ENCODE measurements at regions of chr14 and their contacts with region 1.

Region 1: GRCh38 chr14:22570132-22570949 is 18.7 kb downstream of the DAD1 start:
- DNase-seq: peak; percentile 91
- H3K4me3 Mint-ChIP-seq: peak overlapping the region; percentile 80
- H3K27ac Mint-ChIP-seq: peak overlapping the region; percentile 99
- H3K4me1 Mint-ChIP-seq: peaks cover 74% of the 10 kb centered on the region
- H3K27me3 Mint-ChIP-seq: no peaks in the 10 kb centered on the region

Region 2: GRCh38 chr14:21987937-21988336 is 582.4 kb before region 1 on chr14:
- CTCF ChIA-PET with region 1: interaction called, 11 read pairs
- POLR2A ChIA-PET with region 1: no interaction called
- intact Hi-C with region 1: no loop called
- DNase-seq: peak; percentile 25
- H3K4me3 Mint-ChIP-seq: no peak overlapping the region
- H3K27ac Mint-ChIP-seq: peak overlapping the region; percentile 92
- H3K4me1 Mint-ChIP-seq: peaks cover 11% of the 10 kb centered on the region
- H3K27me3 Mint-ChIP-seq: no peaks in the 10 kb centered on the region

Region 3: DNA sequence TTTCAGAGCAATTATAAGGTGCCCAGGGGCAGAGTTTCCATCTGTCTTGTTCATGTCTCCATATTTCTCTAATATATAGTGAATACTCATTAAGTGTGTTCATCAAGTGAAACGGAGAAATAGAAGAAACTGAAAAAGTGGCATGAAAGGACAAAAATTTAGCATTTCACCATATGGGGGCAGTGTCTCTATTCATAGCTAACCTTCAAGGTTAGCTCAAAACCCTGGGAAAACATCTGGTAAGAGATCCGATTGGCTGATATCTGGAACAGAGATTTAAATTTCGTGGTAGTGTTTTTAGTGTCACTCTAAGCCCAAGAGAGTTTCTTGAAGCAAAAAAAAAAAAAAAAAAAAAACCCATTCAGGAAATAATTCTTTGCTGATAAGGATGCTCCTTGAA is 348.8 kb before region 1 on chr14:
- CTCF ChIA-PET with region 1: interaction called, 5 read pairs
- POLR2A ChIA-PET with region 1: no interaction called
- intact Hi-C with region 1: loop called (anchors 5 kb)
- DNase-seq: no peak
- H3K4me3 Mint-ChIP-seq: peak overlapping the region; percentile 59
- H3K27ac Mint-ChIP-seq: peak overlapping the region; percentile 56
- H3K4me1 Mint-ChIP-seq: peaks cover 10% of the 10 kb centered on the region
- H3K27me3 Mint-ChIP-seq: no peaks in the 10 kb centered on the region

Region 4: GRCh38 chr14:22542360-22542759 is 28.0 kb before region 1 on chr14:
- CTCF ChIA-PET with region 1: interaction called, 15 read pairs
- POLR2A ChIA-PET with region 1: interaction called, 24 read pairs
- intact Hi-C with region 1: no loop called
- DNase-seq: no peak
- H3K4me3 Mint-ChIP-seq: peak overlapping the region; percentile 81
- H3K27ac Mint-ChIP-seq: peak overlapping the region; percentile 99
- H3K4me1 Mint-ChIP-seq: peaks cover 98% of the 10 kb centered on the region
- H3K27me3 Mint-ChIP-seq: no peaks in the 10 kb centered on the region

Region 5: GRCh38 chr14:22653012-22653621 is 82.8 kb after region 1 on chr14:
- CTCF ChIA-PET with region 1: interaction called, 72 read pairs
- POLR2A ChIA-PET with region 1: interaction called, 4 read pairs
- intact Hi-C with region 1: loop called (anchors 1 kb)
- DNase-seq: peak; percentile 66
- H3K4me3 Mint-ChIP-seq: no peak overlapping the region
- H3K27ac Mint-ChIP-seq: no peak overlapping the region
- H3K4me1 Mint-ChIP-seq: no peaks in the 10 kb centered on the region
- H3K27me3 Mint-ChIP-seq: no peaks in the 10 kb centered on the region

Region 6: DNA sequence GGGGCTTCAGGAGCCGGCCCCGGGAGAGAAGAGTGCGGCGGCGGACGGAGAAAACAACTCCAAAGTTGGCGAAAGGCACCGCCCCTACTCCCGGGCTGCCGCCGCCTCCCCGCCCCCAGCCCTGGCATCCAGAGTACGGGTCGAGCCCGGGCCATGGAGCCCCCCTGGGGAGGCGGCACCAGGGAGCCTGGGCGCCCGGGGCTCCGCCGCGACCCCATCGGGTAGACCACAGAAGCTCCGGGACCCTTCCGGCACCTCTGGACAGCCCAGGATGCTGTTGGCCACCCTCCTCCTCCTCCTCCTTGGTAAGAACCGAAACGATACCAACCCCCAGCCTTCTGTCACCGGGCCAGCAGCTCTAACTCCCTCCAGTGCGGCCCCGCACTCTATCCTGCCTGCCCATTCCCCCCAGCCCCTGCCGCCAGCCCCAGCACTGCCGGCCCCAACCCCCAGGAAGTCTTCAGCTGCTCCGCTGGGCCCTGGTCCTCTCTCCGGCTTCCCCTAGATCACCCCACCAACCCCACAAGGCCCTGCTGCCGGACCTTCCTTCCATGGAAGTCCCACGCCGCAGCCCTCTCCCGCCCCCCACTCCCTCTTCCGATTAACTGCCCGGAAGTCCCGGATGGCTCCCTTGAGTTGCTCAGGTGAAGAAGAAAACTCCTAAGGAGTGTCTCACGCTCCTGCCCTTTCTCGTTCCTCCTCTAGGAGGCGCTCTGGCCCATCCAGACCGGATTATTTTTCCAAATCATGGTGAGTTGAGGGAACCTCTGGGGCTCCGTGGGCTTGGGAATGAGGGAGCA is 301.9 kb after region 1 on chr14:
- CTCF ChIA-PET with region 1: interaction called, 10 read pairs
- POLR2A ChIA-PET with region 1: no interaction called
- intact Hi-C with region 1: no loop called
- DNase-seq: peak; percentile 84
- H3K4me3 Mint-ChIP-seq: peak overlapping the region; percentile 88
- H3K27ac Mint-ChIP-seq: peak overlapping the region; percentile 100
- H3K4me1 Mint-ChIP-seq: peaks cover 33% of the 10 kb centered on the region
- H3K27me3 Mint-ChIP-seq: no peaks in the 10 kb centered on the region

Measured in activated CD4-positive, alpha-beta memory T cell treated with anti-CD3 and anti-CD28 coated beads for 36 hours (primary cell).